GM10248 (cell line): ENCODE measurements at regions of chr19 and their contacts with region 1.

Region 1: GRCh38 chr19:47124937-47125668 is 5.5 kb upstream of the SAE1 start:
- DNase-seq: peak; percentile 63
- CTCF ChIP-seq: peak; percentile 50

Region 2: DNA sequence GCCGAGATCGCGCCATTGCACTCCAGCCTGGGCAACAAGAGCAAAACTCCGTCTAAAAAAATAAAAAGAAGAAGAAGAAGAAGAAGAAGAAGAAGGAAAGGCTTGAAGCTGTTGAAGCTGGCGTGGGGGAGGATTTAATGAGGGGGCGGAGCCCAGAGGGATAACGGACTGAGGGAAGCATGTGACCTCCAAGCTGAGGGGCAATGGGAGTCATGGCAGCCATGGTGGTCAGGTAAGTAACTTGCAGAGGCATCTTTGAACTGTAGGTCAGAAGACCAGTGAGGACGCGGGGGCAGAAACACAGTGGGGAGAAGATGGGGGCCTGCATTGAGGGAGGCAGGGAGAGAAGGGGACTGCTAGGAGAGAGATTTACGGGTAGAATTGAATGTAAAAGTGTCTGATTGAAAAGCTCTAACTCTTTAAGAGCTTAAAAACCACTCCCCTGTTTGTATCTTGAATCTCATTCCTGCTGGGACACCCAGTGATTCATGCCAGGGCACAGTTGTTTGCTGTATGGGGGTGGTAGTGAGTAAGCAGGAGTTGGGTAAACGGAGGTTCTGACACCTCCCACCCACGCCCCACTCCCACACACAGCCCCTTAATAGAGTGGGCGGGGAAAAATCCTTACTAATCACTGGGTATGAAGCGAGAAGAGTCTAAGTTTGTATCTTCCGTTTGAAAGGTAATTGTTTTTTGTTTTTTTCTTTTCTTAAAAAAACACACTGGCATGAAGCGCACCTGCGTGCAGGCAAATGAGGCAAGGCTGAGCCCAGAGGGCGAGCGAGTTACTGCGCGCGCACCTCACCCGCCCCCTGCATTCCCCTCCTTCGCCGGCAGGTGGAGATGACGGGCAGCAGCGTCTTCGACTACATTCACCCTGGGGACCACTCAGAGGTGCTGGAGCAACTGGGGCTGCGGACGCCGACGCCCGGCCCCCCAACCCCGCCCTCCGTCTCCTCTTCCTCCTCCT is 89.7 kb before region 1 on chr19:
- CTCF ChIA-PET with region 1: interaction called, 12 read pairs
- POLR2A ChIA-PET with region 1: no interaction called
- DNase-seq: peak; percentile 97
- CTCF ChIP-seq: peak; percentile 93

Region 3: DNA sequence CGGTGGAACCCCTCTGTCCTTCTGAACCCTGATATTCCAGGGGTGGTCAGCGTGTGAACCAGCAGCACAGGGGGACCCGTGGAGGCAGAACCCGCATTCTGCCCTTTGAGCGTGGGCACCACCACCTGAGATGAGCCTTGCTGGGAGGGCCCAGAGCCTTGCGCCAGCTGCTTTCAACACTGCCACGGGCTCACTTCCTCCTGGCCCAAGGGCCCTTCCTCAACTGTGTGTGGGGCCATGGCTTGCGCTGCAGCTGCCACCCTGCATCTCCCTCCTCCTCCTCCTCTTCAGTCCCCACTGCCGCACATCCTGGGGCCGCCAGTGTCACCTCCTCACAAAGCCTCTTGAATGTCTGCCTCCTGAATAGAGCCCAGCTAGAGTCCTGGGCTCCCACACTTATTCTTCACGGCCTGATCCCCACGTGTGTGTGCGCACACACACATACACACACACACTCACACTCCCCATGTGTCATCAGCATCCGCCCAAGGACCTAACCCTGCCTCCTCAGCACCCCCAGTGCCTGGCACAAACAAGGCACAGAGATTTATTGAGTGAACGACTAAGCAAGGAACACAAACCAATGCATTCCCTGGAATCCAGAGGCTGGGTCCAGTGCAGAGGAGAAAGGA is 49.8 kb before region 1 on chr19:
- CTCF ChIA-PET with region 1: interaction called, 90 read pairs
- POLR2A ChIA-PET with region 1: no interaction called
- DNase-seq: no peak
- CTCF ChIP-seq: no peak

Region 4: GRCh38 chr19:47081111-47081510 is 44.0 kb before region 1 on chr19:
- CTCF ChIA-PET with region 1: interaction called, 90 read pairs
- POLR2A ChIA-PET with region 1: no interaction called
- DNase-seq: no peak
- CTCF ChIP-seq: no peak

Region 5: DNA sequence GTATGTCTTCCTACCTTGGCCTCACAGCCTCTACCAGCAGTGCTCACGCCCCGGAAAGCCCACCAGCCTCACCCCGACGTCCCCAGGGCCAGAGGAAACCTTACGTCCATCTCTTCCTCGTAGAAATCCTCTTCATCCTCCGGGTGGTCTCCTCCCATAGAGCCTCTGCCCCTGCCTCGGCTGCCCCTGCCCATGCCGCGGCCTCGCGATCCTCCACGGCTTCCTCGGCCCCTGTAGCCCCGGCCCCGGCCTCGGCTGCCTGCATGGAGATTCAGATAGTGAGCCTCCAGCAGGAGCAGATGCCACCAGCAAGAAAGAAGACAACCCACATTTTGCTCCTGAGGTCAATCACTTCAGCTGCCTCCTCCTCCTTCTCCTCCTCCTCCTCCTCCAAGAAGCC is 38.8 kb before region 1 on chr19:
- CTCF ChIA-PET with region 1: interaction called, 90 read pairs
- POLR2A ChIA-PET with region 1: no interaction called
- DNase-seq: no peak
- CTCF ChIP-seq: no peak

Region 6: GRCh38 chr19:47112997-47113849 is 11.9 kb before region 1 on chr19 and contains the start of gene ZC3H4:
- CTCF ChIA-PET with region 1: interaction called, 20 read pairs
- POLR2A ChIA-PET with region 1: interaction called, 6 read pairs
- DNase-seq: peak; percentile 98
- CTCF ChIP-seq: no peak